ENCODE measurements at regions of chr7 and their contacts with region 1.

Region 1: GRCh38 chr7:25098096-25099046 is 26.7 kb downstream of the CYCS start:
- DNase-seq: peak; percentile 72
- H3K4me3 Mint-ChIP-seq: no peak overlapping the region
- H3K27ac Mint-ChIP-seq: no peak overlapping the region
- H3K4me1 Mint-ChIP-seq: peaks cover 3% of the 10 kb centered on the region
- H3K27me3 Mint-ChIP-seq: no peaks in the 10 kb centered on the region
- CTCF ChIP-seq: peak; percentile 77

Region 2: GRCh38 chr7:24401628-24402593 is 696.5 kb before region 1 on chr7:
- CTCF ChIA-PET with region 1: no interaction called
- POLR2A ChIA-PET with region 1: no interaction called
- intact Hi-C with region 1: loop called (anchors 5 kb)
- DNase-seq: peak; percentile 39
- H3K4me3 Mint-ChIP-seq: peak overlapping the region; percentile 43
- H3K27ac Mint-ChIP-seq: no peak overlapping the region
- H3K4me1 Mint-ChIP-seq: peaks cover 15% of the 10 kb centered on the region
- H3K27me3 Mint-ChIP-seq: no peaks in the 10 kb centered on the region
- CTCF ChIP-seq: peak; percentile 32

Region 3: GRCh38 chr7:24545215-24545614 is 553.2 kb before region 1 on chr7:
- CTCF ChIA-PET with region 1: no interaction called
- POLR2A ChIA-PET with region 1: no interaction called
- intact Hi-C with region 1: no loop called
- DNase-seq: no peak
- H3K4me3 Mint-ChIP-seq: no peak overlapping the region
- H3K27ac Mint-ChIP-seq: no peak overlapping the region
- H3K4me1 Mint-ChIP-seq: no peaks in the 10 kb centered on the region
- H3K27me3 Mint-ChIP-seq: peaks cover under 1% of the 10 kb centered on the region
- CTCF ChIP-seq: no peak

Region 4: GRCh38 chr7:24812310-24812945 is 285.9 kb before region 1 on chr7:
- CTCF ChIA-PET with region 1: interaction called, 186 read pairs
- POLR2A ChIA-PET with region 1: interaction called, 6 read pairs
- intact Hi-C with region 1: loop called (anchors 1 kb)
- DNase-seq: peak; percentile 60
- H3K4me3 Mint-ChIP-seq: no peak overlapping the region
- H3K27ac Mint-ChIP-seq: no peak overlapping the region
- H3K4me1 Mint-ChIP-seq: peaks cover 3% of the 10 kb centered on the region
- H3K27me3 Mint-ChIP-seq: no peaks in the 10 kb centered on the region
- CTCF ChIP-seq: peak; percentile 82

Region 5: DNA sequence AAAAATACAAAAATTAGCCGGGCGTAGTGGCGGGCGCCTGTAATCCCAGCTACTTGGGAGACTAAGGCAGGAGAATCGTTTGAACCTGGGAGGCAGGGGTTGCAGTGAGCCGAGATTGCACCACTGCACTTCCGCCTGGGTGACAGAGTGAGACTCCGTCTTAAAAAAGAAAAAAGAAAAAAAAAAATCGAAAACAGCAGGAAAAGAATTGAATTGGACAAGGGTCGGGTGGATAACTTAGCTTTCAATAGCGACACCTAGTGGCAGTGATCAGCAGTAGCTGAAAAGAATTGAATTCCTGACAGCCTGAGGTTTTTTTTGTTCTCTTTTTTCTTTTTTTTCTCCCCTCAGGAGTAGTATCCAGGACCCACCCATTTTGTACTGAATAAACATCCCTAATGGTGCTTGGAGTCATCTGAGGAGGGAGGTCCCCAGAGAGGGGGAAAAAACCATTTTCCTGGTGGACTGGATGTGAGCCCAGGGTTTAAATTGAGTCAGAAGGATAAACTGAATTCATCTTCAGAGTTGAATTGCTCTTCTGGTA is 28.4 kb before region 1 on chr7:
- CTCF ChIA-PET with region 1: interaction called, 16 read pairs
- POLR2A ChIA-PET with region 1: interaction called, 3 read pairs
- intact Hi-C with region 1: no loop called
- DNase-seq: peak; percentile 70
- H3K4me3 Mint-ChIP-seq: no peak overlapping the region
- H3K27ac Mint-ChIP-seq: no peak overlapping the region
- H3K4me1 Mint-ChIP-seq: peaks cover 8% of the 10 kb centered on the region
- H3K27me3 Mint-ChIP-seq: no peaks in the 10 kb centered on the region
- CTCF ChIP-seq: peak; percentile 85

Region 6: GRCh38 chr7:25109276-25109675 is 10.9 kb after region 1 on chr7:
- CTCF ChIA-PET with region 1: interaction called, 23 read pairs
- POLR2A ChIA-PET with region 1: interaction called, 4 read pairs
- intact Hi-C with region 1: no loop called
- DNase-seq: no peak
- H3K4me3 Mint-ChIP-seq: no peak overlapping the region
- H3K27ac Mint-ChIP-seq: no peak overlapping the region
- H3K4me1 Mint-ChIP-seq: peaks cover 8% of the 10 kb centered on the region
- H3K27me3 Mint-ChIP-seq: no peaks in the 10 kb centered on the region
- CTCF ChIP-seq: no peak

Measured in MCF 10A (cell line).